ENCODE measurements at regions of chr3 and their contacts with region 1.

Region 1: DNA sequence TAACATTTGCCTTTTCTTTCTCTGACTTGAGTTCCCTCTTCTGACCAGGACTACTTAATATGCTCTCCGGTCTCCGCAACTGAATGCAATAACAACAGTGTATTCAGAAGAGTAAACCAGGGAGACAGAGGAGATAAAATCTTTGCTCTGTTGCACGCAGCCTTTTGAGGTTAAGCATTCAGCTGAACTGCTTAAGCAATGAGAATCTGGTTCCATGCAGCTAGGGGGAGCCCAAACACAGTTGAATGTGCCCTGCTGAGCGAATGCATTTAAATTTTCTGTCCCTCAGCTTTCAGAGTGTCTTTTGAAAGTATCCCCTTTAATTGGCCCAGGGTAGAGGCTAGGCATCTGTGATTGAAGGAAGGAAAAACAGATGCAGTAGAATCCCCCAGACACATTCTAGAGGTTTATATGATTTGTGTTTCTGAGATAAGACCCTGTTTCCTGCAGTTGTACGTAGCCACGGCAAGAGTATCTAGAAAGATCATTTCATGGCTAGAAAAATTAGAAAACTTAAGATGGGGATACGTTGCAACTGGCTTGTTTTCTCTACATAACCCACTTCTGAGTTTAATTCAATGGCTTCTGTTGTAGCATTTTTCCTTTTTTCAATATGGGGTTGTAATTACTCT is 309.6 kb downstream of the TUSC7 start:
- DNase-seq: no peak
- ATAC-seq: peak; percentile 94
- H3K4me3 ChIP-seq: no peak overlapping the region
- H3K27ac ChIP-seq: no peak overlapping the region
- H3K4me1 ChIP-seq: peaks cover 7% of the 10 kb centered on the region
- H3K27me3 ChIP-seq: no peaks in the 10 kb centered on the region
- CTCF ChIP-seq: peak; percentile 77 to 81 (median 79)
- EP300 ChIP-seq: no peak
- POLR2A ChIP-seq: no peak
- RAD21 ChIP-seq: peak; percentile 82

Region 2: DNA sequence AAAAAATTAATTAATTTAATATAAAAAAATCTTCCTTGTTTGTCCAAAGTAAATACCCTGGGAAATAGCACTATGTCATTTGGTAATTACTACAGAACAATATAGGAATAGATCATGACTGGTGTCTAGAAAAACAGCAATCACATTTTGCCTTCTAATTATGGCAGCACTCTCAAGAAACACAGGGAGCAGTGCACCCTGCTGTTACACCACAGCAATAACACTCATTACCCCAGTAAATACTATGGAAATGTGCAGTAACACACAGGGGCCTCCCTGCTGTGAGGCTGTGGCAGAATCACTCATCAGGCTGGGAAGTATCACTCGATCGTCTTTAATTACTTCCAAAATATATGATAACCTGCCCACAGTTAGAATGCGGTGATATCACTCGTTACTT is 336.4 kb after region 1 on chr3:
- CTCF ChIA-PET with region 1: interaction called, 3 read pairs
- POLR2A ChIA-PET with region 1: no interaction called
- RAD21 ChIA-PET with region 1: interaction called, 3 read pairs
- SMC1A ChIA-PET with region 1: no interaction called
- in situ Hi-C with region 1: no loop called
- intact Hi-C with region 1: loop called (anchors 1 kb)
- DNase-seq: no peak
- ATAC-seq: peak; percentile 90
- H3K4me3 ChIP-seq: no peak overlapping the region
- H3K27ac ChIP-seq: no peak overlapping the region
- H3K4me1 ChIP-seq: no peaks in the 10 kb centered on the region
- H3K27me3 ChIP-seq: no peaks in the 10 kb centered on the region; a peak in 1 of 4 replicates
- CTCF ChIP-seq: peak; percentile 27 to 60 (median 51); a peak in 3 of 6 replicates
- EP300 ChIP-seq: no peak
- POLR2A ChIP-seq: no peak
- RAD21 ChIP-seq: peak; percentile 49

Region 3: GRCh38 chr3:117719316-117719926 is 700.2 kb after region 1 on chr3:
- CTCF ChIA-PET with region 1: interaction called, 4 read pairs
- POLR2A ChIA-PET with region 1: no interaction called
- RAD21 ChIA-PET with region 1: interaction called, 3 read pairs
- SMC1A ChIA-PET with region 1: interaction called, 6 read pairs
- in situ Hi-C with region 1: no loop called
- intact Hi-C with region 1: loop called (anchors 5 kb)
- DNase-seq: no peak
- ATAC-seq: peak; percentile 54; the same call in 2 of the 3 replicates
- H3K4me3 ChIP-seq: no peak overlapping the region
- H3K27ac ChIP-seq: no peak overlapping the region
- H3K4me1 ChIP-seq: no peaks in the 10 kb centered on the region
- H3K27me3 ChIP-seq: no peaks in the 10 kb centered on the region; a peak in 1 of 4 replicates
- CTCF ChIP-seq: peak; percentile 50 to 57 (median 55)
- EP300 ChIP-seq: no peak
- POLR2A ChIP-seq: no peak
- RAD21 ChIP-seq: peak; percentile 54; the same call in 1 of the 2 replicates

Measured in GM12878 (cell line).